ENCODE measurements at regions of chr9 and their contacts with region 1.

Region 1: GRCh38 chr9:115109486-115109885 is 8.5 kb downstream of the TNC start:
- DNase-seq: peak; percentile 54
- ATAC-seq: no peak
- H3K4me3 ChIP-seq: no peak overlapping the region
- H3K27ac ChIP-seq: no peak overlapping the region
- H3K4me1 ChIP-seq: peaks cover 47% of the 10 kb centered on the region
- H3K27me3 ChIP-seq: no peaks in the 10 kb centered on the region
- CTCF ChIP-seq: no peak

Region 2: DNA sequence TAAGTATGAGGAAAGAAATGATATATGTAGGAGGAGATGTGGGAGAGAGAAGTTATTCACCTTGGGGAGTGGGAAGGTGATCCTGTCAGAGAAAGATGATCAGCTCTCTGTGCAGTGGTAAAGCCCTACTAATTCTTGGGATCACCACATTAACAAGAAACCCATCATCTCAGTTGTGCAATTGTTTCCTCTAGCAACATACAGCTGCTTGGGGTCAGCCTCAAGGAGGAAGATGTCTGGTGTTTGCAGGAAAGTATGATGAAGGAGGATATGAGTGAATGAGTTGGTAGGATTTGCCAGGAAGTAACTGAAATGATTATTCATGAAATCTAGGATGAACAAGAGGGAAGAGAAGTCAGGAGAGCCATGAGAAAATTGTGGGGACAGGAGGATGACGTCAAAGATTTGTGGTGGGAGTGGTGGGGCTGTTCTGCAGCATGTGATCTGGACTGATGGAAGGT is 229.2 kb before region 1 on chr9:
- CTCF ChIA-PET with region 1: no interaction called
- POLR2A ChIA-PET with region 1: no interaction called
- intact Hi-C with region 1: no loop called
- DNase-seq: no peak
- ATAC-seq: no peak
- H3K4me3 ChIP-seq: no peak overlapping the region
- H3K27ac ChIP-seq: no peak overlapping the region
- H3K4me1 ChIP-seq: peaks cover 19% of the 10 kb centered on the region
- H3K27me3 ChIP-seq: no peaks in the 10 kb centered on the region
- CTCF ChIP-seq: no peak

Region 3: DNA sequence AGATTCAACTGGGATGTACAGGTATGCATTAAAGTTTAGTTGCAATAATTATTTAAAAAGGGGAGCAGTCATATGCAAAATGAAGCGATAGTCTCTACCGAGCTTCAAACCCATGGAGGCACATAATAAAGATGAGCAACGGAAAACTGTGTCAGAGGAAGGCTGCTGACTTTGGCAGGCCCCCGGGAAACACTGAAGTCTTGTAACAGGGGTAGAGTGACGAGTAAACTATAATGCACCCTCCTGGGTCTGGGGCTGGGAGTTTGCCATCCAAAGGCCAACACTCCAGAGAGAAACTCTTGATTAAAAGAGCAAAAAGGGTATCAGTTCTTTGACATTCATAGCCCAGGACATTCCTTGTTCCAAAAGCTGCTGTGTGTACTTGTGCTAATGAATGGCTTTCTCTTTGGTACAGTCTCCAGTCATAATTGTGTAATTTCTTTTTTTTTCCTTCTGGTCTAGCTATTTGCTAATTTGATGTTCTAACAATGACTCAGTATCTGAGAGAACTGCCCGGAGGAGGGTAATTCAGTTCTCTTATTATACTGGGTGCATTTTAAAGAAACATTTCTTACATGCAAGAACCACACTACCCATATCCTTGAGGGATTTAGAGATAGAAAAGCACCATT is 50.7 kb before region 1 on chr9:
- CTCF ChIA-PET with region 1: no interaction called
- POLR2A ChIA-PET with region 1: no interaction called
- intact Hi-C with region 1: no loop called
- DNase-seq: peak; percentile 65
- ATAC-seq: peak; percentile 87
- H3K4me3 ChIP-seq: no peak overlapping the region
- H3K27ac ChIP-seq: peak overlapping the region; percentile 45
- H3K4me1 ChIP-seq: peaks cover 28% of the 10 kb centered on the region
- H3K27me3 ChIP-seq: no peaks in the 10 kb centered on the region
- CTCF ChIP-seq: no peak

Region 4: DNA sequence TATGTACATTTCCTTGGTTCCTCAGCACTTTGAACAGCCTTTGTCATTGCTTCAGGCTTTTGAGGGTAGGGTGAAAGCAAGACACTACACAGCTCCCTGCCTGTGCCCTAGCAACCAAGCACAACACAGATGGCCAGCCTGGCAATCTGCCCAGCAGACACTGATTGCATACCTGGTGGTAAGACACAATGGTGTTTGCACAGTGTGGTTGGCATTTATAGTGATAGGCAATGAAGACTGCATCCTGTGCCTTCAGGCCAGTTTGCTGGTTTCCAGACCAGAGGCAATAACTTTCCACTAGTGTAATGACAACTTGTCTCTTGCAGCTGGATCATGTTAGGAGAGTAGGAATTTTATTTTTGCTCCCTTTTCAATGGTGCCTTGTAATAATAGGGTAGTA is 153.0 kb after region 1 on chr9:
- CTCF ChIA-PET with region 1: no interaction called
- POLR2A ChIA-PET with region 1: no interaction called
- intact Hi-C with region 1: loop called (anchors 5 kb)
- DNase-seq: peak; percentile 99
- ATAC-seq: peak; percentile 83
- H3K4me3 ChIP-seq: 0 out of 2 replicates have a peak overlapping the region, but pooled peaks have one; percentile 24
- H3K27ac ChIP-seq: peak overlapping the region; percentile 99
- H3K4me1 ChIP-seq: peaks cover 49% of the 10 kb centered on the region
- H3K27me3 ChIP-seq: no peaks in the 10 kb centered on the region
- CTCF ChIP-seq: no peak